Posterior vena cava (tissue), 2 donors: ENCODE measurements at regions of chr11 and their contacts with region 1.

Region 1: GRCh38 chr11:65418711-65419459 is 3.7 kb upstream of the NEAT1 start:
- DNase-seq: peak; percentile 99

Region 2: DNA sequence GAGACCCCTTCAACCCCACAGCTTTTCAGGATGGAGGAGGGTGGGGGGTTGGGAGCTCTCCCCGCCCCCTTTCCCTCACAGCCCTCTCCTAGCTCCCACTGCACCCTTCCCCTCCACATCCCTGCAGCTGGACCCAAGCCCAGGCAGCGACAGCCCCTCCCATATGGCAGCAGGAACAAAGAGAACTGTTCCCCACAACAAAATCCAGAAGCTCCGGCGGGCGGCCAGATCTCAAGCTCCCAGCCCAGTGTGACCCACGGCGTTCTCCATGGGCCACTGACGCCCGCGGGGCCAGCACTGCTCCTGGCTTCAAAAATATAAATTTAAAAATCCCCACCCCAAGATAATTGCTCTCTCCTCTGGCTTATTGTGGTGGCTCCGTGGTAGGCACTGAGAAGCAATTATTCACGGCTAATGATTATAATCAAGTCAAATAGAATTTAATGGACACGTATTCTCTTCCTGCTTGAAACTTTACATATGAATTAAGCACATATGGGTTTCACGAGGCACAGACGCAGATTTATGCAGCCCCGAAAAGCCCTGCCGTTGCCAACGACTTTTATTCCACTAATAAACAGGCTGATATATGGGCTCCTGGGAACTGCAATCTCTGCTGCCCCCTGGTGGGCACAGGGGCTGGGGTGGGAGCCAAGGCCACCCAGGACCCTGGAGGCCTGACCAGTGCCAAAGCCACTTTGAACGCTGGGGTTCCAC is 1270.5 kb before region 1 on chr11:
- intact Hi-C with region 1: no loop called
- DNase-seq: peak; percentile 92

Region 3: GRCh38 chr11:65497141-65498041 is 78.5 kb after region 1 on chr11:
- intact Hi-C with region 1: loop called (anchors 2 kb)
- DNase-seq: peak; percentile 100